Mammary epithelial cell (primary cell): ENCODE measurements at regions of chrX and their contacts with region 1.

Region 1: GRCh38 chrX:107324499-107325320 is 118.3 kb downstream of the DNAAF6 start:
- DNase-seq: peak; percentile 13
- H3K4me3 ChIP-seq: no peak overlapping the region
- H3K27ac ChIP-seq: no peak overlapping the region
- H3K4me1 ChIP-seq: no peaks in the 10 kb centered on the region
- H3K27me3 ChIP-seq: no peaks in the 10 kb centered on the region
- CTCF ChIP-seq: peak; percentile 15 to 45

Region 2: DNA sequence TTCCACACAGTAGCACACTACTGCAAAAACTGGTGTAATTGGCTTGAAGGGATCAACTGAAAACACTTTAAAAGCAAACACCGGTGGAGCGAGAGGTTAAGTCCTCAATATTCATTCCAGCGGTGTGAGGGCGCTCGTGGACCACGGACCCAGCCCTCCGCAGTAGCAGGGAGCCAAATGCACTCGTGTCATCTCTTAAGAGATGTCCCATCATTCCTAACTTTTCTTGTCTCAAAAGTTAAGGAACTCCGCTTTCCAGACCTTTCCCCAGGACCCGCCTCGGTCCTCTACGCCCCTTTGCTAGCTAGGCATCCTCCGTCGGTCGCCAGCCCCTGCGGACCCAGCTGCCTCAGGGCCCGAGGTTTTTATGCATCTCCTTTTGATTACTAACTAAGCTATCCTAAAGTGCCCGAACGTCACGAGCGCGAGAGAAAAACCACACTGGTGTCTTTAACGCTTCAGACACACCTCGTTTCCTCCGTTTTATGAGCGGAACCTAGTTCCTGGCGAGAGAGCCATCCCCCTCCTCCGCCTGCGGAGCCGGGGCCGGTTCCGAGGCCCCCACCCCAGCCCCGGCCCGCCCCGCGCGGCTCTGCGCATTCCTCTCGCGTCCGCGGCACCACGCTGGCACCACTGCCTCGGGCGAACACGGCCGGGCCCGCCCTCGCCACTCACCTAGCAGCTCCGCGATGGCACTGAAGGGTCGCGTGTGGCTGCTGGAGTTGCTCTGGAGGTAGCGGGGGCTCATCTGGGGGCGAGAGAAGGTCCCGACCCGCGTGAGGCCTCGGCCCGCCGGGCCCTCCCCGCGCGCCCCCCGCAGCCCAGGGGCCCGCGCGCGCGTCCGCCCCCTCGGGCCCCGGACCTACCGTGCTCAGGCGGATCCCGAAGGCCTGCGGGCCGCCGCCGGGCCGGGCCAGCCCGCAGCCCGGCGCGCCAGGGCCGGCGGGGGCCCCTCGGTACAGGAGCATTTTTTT is 325.4 kb before region 1 on chrX:
- CTCF ChIA-PET with region 1: no interaction called
- dilution Hi-C with region 1: no loop called
- in situ Hi-C with region 1: no loop called
- intact Hi-C with region 1: loop called (anchors 1 kb)
- DNase-seq: peak; percentile 47
- H3K4me3 ChIP-seq: peak overlapping the region; percentile 56 to 63 (median 60)
- H3K27ac ChIP-seq: no peak overlapping the region
- H3K4me1 ChIP-seq: no peaks in the 10 kb centered on the region
- H3K27me3 ChIP-seq: no peaks in the 10 kb centered on the region
- CTCF ChIP-seq: peak; percentile 17 to 68

Region 3: GRCh38 chrX:107102975-107103374 is 221.7 kb before region 1 on chrX:
- CTCF ChIA-PET with region 1: interaction called, 5 read pairs
- dilution Hi-C with region 1: no loop called
- in situ Hi-C with region 1: no loop called
- intact Hi-C with region 1: loop called (anchors 1 kb)
- DNase-seq: peak; percentile 2
- H3K4me3 ChIP-seq: no peak overlapping the region
- H3K27ac ChIP-seq: no peak overlapping the region
- H3K4me1 ChIP-seq: no peaks in the 10 kb centered on the region
- H3K27me3 ChIP-seq: no peaks in the 10 kb centered on the region
- CTCF ChIP-seq: peak; percentile 6 to 46

Region 4: DNA sequence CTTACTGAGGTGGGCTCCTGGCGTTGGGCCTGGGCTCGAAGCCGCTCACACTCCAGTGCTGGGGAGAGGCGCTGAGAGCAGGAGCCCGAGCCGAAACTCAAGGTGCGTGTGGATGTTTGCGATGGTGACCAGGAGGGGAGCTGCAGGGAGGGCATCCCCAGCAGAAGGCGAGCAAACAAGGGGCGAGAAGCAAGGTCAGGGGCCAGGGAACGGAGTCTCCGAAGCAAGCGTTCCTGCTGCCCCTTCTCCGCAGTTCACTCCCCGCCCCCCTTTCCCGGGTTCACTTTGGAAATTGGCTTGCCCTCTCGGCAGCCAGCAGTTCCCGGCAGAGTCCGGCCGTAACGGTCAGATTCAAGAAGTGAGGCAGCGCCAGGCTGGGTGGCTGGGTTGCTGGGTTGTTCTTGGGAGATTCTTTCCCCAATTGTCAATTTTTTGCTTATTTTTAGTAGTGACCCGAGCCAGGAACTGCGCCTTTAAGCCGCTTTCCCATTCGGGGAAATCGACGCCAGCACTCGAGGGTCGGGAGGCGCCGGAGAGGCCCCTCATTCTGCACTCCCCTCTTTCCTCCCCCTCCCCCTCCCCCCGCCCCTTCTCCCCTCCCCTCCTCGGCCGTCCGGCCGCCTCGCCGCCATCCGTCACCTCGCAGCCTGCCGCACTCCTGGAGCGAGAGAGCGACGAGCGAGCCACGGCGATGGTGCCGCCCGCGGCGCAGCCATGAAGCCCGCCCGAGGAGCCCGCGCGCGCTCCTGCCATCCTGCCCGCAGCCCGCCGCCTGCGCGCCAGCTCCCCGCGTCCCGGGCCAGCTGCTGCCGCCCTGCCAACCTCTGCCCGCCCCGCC is 124.5 kb after region 1 on chrX and contains the start of gene FRMPD3:
- CTCF ChIA-PET with region 1: no interaction called
- dilution Hi-C with region 1: no loop called
- in situ Hi-C with region 1: no loop called
- intact Hi-C with region 1: no loop called
- DNase-seq: no peak
- H3K4me3 ChIP-seq: peak within 1 kb of the TSS in 2 of 3 experiments; percentile 20 to 34
- H3K27ac ChIP-seq: no peak within 1 kb of the TSS
- H3K4me1 ChIP-seq: peaks cover 9% of the 10 kb centered on the region
- H3K27me3 ChIP-seq: peaks cover 28% of the 10 kb centered on the region
- CTCF ChIP-seq: peak in 1 of 2 donors; percentile 1
- total RNA-seq, gene FRMPD3: under 0.01 TPM in 1 of 2 donors, not detected in the other